ENCODE measurements at regions of chr14 and their contacts with region 1.

Region 1: GRCh38 chr14:54566410-54567223 is at the start of gene SAMD4A:
- DNase-seq: peak; percentile 46
- H3K4me3 ChIP-seq: peak within 1 kb of the TSS; percentile 72
- H3K27ac ChIP-seq: no peak within 1 kb of the TSS
- H3K4me1 ChIP-seq: peaks cover 33% of the 10 kb centered on the region
- CTCF ChIP-seq: 0 out of 2 replicates have a peak, but pooled peaks have one; percentile 20
- total RNA-seq, gene SAMD4A: 0.05 and 0.06 TPM in 2 replicates

Region 2: GRCh38 chr14:54366736-54367735 is 199.6 kb before region 1 on chr14:
- CTCF ChIA-PET with region 1: no interaction called
- POLR2A ChIA-PET with region 1: no interaction called
- intact Hi-C with region 1: loop called (anchors 10 kb)
- DNase-seq: peak; percentile 65
- H3K4me3 ChIP-seq: no peak overlapping the region
- H3K27ac ChIP-seq: no peak overlapping the region
- H3K4me1 ChIP-seq: no peaks in the 10 kb centered on the region
- CTCF ChIP-seq: peak; percentile 80

Region 3: DNA sequence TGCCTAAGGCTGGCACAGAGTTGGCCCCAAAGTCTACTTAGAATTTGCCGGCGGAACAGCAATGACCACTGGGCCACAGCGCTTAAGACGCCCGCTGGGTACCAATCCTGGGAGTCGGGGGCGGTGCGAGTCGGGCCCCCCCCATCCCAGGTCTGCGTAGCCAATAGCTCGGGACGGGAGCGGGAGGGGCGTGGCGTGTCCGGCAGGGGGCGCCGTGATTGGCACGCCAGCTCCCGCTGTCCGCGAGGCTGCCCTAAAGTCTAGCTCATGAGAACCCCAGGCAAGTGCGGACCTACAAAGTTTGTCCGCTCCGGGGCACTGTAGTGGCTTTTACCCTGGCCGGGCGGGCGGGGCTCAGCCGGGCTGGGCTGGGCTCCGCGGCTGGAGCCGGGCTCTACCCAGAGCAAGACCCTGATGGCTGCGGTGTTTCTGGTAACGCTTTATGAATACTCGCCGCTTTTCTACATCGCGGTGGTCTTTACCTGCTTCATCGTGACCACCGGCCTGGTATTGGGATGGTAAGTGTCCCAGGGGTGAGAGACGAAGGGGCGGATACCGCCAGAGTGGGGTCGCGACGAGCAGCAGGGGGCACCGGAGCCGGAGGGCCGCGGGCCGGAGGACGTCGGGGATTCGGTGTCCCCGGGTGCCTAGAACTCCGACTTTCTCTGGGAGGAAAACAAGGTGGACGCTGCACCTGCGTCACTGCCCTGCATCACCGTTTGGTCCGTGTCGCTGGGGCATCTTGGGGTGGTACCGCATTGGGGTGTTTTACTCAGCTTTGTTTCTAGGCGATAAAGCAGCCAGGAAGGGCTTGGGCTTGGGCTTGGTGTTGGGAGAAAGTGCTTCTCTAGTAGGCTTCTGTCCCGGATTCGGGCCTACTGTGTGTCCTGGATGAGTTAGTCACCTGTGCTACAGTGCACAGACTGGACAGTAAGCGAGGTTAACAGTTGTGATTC is 56.8 kb before region 1 on chr14 and contains the start of gene CGRRF1:
- CTCF ChIA-PET with region 1: no interaction called
- POLR2A ChIA-PET with region 1: no interaction called
- intact Hi-C with region 1: loop called (anchors 2 kb)
- DNase-seq: peak; percentile 97
- H3K4me3 ChIP-seq: peak within 1 kb of the TSS; percentile 85
- H3K27ac ChIP-seq: no peak within 1 kb of the TSS
- H3K4me1 ChIP-seq: peaks cover 18% of the 10 kb centered on the region
- CTCF ChIP-seq: peak; percentile 66
- total RNA-seq, gene CGRRF1: 8.4 and 10.0 TPM in 2 replicates

Region 4: GRCh38 chr14:54691525-54692283 is 125.1 kb after region 1 on chr14:
- CTCF ChIA-PET with region 1: no interaction called
- POLR2A ChIA-PET with region 1: no interaction called
- intact Hi-C with region 1: loop called (anchors 1 kb)
- DNase-seq: peak; percentile 40
- H3K4me3 ChIP-seq: no peak overlapping the region
- H3K27ac ChIP-seq: no peak overlapping the region
- H3K4me1 ChIP-seq: no peaks in the 10 kb centered on the region
- CTCF ChIP-seq: peak; percentile 82

Region 5: DNA sequence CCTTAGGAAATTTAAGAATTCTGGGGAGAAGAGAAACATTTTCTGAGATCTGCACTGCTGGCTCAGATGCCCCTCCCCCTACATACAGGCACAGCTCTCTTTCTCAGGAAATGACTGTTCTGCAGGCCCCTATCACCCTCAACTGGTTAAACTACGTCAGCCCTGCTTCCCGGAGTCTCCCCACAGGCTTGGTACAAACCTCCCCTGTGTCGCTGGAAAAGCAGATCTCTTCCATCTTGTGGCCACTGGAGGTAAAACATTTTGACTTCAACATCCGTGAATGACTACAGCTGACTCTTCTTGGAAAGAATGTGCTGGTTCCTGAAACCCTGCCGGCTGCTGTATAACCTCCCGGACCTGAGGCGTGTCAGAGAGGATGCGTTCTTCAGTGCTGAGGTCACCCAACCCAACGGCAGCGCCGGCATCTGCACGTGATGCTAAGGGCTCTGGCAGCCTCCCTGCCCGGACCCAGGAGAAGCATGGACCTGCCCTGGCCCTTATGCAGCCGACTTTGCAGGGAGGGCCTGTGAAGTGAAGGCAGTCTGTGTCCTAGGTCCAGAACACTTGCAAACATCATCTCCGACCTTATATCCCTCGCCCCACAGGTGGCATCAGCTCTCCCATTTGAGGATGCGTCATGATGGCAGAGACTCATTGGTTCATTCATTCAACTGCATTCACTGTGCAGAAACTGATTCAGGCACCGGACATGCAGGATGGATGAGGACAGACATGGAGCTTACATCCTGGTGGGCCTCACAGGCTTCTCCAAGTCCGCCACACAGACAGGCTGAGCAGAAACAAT is 206.8 kb after region 1 on chr14:
- CTCF ChIA-PET with region 1: interaction called, 4 read pairs
- POLR2A ChIA-PET with region 1: no interaction called
- intact Hi-C with region 1: loop called (anchors 1 kb)
- DNase-seq: peak; percentile 37
- H3K4me3 ChIP-seq: no peak overlapping the region
- H3K27ac ChIP-seq: no peak overlapping the region
- H3K4me1 ChIP-seq: peaks cover 9% of the 10 kb centered on the region
- CTCF ChIP-seq: peak; percentile 40; the same call in 1 of the 2 replicates

Region 6: DNA sequence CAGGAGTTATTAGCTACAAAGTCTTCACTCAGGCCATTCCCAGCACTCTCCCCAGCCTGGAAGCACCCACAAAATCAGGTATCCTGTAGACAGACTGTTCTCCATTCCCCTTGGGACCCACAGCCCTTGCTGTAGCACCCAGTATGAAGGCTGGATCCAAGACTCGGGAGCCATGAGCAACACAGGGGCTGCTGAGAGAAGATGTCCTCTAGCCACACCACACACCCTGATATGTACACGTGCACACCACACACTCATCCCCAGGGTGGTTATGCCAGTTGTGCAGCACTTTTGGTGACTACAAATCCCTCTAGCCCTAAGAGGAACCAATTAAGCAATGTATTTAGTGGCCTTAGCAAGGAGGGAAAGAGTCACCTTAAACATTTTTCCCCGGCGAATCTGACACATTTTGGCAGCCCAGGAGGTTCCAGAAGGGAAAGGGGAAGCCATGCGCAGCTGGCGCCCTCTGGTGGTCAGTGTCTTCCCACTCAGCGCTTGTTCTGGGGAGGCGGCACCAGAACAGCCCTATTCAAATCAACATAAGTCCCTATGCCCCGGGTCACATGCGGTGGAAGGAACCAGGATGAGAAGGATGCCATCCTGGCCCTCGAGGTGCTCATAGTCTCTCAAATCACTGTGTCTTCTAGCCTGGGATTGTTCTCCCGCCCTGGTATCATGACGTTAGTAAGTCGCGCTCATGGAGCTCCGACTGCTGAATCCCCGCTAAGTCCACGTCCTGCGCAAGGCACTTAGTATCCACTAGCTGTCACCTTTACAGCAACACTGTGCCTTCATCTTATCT is 239.1 kb after region 1 on chr14:
- CTCF ChIA-PET with region 1: no interaction called
- POLR2A ChIA-PET with region 1: no interaction called
- intact Hi-C with region 1: loop called (anchors 1 kb)
- DNase-seq: peak; percentile 75
- H3K4me3 ChIP-seq: no peak overlapping the region
- H3K27ac ChIP-seq: no peak overlapping the region
- H3K4me1 ChIP-seq: no peaks in the 10 kb centered on the region
- CTCF ChIP-seq: peak; percentile 93

Region 7: GRCh38 chr14:54902521-54903420 is 336.2 kb after region 1 on chr14 and contains the start of gene GCH1:
- CTCF ChIA-PET with region 1: no interaction called
- POLR2A ChIA-PET with region 1: no interaction called
- intact Hi-C with region 1: loop called (anchors 5 kb)
- DNase-seq: peak; percentile 86
- H3K4me3 ChIP-seq: peak within 1 kb of the TSS; percentile 87
- H3K27ac ChIP-seq: peak within 1 kb of the TSS; percentile 46
- H3K4me1 ChIP-seq: peaks cover 8% of the 10 kb centered on the region
- CTCF ChIP-seq: peak; percentile 82
- total RNA-seq, gene GCH1: 13.8 and 14.7 TPM in 2 replicates

Measured in OCI-LY7 (cell line).